Dendritic cell treated with granulocyte-macrophage colony-stimulating factor and Interleukin-4, amounts not matched to agents 40 ng/mL and 50 ng/mL, for 4 days (primary cell): ENCODE measurements at regions of chr1 and their contacts with region 1.

Region 1: DNA sequence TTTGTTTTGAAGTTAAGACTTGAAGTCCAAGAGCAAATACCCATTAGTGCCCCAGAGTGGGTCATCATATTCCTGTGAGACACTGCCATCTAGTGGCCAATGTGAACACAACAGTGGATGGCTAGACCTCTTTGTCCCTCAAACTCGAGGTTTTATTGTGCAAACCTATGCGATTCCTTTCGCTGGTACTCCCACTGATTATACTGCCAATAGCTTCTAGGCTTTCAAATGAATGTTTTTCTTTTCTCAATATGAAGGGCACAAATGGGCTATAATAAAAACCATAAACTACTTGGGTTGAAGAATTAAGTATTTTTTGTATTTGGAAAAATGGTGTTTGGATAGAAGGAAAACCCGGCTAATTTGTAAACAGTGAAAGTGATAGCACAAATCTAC is 100.4 kb upstream of the ZNF281 start:
- H3K4me3 Mint-ChIP-seq: no peak overlapping the region
- H3K27ac Mint-ChIP-seq: no peak overlapping the region
- H3K4me1 Mint-ChIP-seq: no peaks in the 10 kb centered on the region
- H3K27me3 Mint-ChIP-seq: peaks cover 4% of the 10 kb centered on the region

Region 2: GRCh38 chr1:199089393-199090122 is 1420.7 kb before region 1 on chr1:
- intact Hi-C with region 1: loop called (anchors 10 kb)
- H3K4me3 Mint-ChIP-seq: no peak overlapping the region
- H3K27ac Mint-ChIP-seq: no peak overlapping the region
- H3K4me1 Mint-ChIP-seq: peaks cover 5% of the 10 kb centered on the region
- H3K27me3 Mint-ChIP-seq: peaks cover 3% of the 10 kb centered on the region

Region 3: GRCh38 chr1:200139661-200140250 is 370.5 kb before region 1 on chr1:
- intact Hi-C with region 1: loop called (anchors 5 kb)
- H3K4me3 Mint-ChIP-seq: no peak overlapping the region
- H3K27ac Mint-ChIP-seq: no peak overlapping the region
- H3K4me1 Mint-ChIP-seq: peaks cover 5% of the 10 kb centered on the region
- H3K27me3 Mint-ChIP-seq: no peaks in the 10 kb centered on the region

Region 4: DNA sequence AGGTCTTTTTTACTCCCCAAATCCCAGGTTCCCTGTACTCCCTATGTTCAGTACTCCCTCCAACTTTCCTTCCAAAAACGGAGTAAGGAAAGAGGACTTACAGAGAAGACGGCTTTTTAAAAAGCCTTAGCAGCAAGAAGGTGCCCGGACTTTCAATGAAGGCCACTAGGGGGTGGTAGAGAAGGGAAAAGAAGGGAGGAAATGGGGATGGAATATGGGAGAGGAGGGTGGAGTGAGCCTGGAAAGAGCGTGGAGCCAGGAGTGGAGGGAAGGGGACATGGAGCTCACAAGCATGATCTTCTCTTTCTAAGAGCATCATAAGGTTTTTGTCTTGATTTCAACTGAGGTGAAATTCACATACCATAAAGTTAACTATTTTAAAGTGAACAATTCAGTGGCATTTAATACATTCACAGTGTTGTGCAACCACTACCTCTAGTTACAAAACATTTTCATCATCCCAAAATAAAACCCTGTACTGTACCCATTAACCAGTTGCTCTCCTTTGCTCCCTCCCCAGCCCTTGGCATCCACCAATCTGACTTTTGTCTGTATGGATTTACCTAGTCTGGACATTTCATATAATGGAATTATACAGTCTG is 230.3 kb before region 1 on chr1:
- intact Hi-C with region 1: loop called (anchors 2 kb)
- H3K4me3 Mint-ChIP-seq: no peak overlapping the region
- H3K27ac Mint-ChIP-seq: no peak overlapping the region
- H3K4me1 Mint-ChIP-seq: peaks cover 16% of the 10 kb centered on the region
- H3K27me3 Mint-ChIP-seq: no peaks in the 10 kb centered on the region

Region 5: DNA sequence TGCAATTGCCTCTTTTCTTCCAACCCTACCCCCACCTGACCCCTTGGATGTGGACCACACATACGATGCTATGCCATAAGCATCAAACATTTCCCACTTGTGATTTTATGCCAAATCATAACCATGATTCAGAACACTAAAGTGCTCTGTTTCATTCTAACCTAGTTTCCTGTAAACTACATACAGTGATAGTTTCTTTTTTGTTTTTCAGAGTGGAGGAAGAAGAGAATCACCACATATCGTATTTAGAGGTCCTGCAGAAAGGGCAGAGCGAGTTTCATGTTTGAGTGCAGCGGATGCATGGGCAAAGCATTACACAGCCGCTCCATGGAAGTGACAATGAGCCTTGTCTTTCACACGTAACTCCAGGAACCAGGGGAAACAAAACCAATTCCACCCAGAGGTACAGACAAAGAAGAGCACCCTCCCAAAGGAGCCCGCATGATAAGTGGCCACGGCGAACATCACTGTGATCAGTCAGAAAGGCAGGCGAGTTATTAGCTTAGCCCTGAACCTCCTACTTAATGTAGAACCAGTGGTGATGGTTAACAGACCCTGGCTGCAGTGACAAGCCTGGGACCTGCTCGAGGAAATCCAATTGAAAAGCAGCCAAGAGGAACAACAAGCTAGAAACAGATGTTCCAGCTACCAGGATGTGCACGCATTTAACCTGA is 36.4 kb before region 1 on chr1:
- intact Hi-C with region 1: no loop called
- H3K4me3 Mint-ChIP-seq: no peak overlapping the region
- H3K27ac Mint-ChIP-seq: no peak overlapping the region
- H3K4me1 Mint-ChIP-seq: no peaks in the 10 kb centered on the region
- H3K27me3 Mint-ChIP-seq: no peaks in the 10 kb centered on the region

Region 6: GRCh38 chr1:200673952-200674823 is 164.0 kb after region 1 on chr1:
- intact Hi-C with region 1: no loop called
- H3K4me3 Mint-ChIP-seq: no peak overlapping the region
- H3K27ac Mint-ChIP-seq: no peak overlapping the region
- H3K4me1 Mint-ChIP-seq: peaks cover 26% of the 10 kb centered on the region
- H3K27me3 Mint-ChIP-seq: no peaks in the 10 kb centered on the region